GM10248 (cell line): ENCODE measurements at regions of chr9 and their contacts with region 1.

Region 1: DNA sequence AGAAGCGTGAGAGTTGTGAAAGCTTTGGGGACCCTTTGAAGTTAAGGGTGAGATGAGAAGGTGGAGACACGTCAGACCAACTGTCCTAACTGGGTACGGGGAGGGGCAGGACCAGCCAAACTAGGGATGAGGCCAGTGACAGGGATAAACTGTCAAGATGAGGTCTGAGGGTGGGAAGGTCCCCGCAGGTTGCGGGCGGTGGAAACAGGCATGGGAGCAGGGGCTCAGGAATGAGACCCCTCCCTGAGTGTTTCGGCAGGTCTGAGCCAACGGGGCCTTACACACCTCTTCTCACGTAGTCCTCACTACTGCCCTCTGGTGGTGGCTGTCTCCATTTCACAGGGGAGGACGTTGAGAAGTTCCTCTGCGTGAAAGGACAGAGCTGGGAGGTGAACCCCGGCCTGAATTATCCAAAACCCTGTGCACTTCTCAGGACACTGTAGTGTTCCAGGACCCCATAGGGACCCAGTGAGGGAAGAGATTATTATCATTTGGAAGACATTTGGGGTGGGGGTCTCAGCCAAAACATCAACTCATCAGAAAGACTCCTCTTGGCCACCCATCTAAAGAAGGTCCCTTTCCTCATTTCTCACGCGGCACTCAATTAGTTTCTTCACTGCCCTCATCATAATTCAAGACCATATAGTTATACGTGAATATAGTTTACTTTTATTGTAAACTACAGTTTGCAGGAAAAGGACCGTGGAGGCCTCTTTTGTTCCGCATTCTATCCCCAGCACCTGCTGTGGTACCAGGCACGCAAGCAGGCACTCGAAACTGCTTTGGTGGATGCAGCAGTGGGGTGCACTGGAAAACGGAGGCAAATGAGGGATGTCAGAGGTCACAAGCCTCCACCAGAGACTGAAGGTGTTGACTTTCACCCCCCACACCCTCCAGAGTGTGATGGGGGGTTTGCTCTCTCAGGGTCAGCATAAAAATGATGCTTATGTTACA is 21.7 kb upstream of the NANS start:
- DNase-seq: peak; percentile 80
- CTCF ChIP-seq: peak; percentile 90

Region 2: DNA sequence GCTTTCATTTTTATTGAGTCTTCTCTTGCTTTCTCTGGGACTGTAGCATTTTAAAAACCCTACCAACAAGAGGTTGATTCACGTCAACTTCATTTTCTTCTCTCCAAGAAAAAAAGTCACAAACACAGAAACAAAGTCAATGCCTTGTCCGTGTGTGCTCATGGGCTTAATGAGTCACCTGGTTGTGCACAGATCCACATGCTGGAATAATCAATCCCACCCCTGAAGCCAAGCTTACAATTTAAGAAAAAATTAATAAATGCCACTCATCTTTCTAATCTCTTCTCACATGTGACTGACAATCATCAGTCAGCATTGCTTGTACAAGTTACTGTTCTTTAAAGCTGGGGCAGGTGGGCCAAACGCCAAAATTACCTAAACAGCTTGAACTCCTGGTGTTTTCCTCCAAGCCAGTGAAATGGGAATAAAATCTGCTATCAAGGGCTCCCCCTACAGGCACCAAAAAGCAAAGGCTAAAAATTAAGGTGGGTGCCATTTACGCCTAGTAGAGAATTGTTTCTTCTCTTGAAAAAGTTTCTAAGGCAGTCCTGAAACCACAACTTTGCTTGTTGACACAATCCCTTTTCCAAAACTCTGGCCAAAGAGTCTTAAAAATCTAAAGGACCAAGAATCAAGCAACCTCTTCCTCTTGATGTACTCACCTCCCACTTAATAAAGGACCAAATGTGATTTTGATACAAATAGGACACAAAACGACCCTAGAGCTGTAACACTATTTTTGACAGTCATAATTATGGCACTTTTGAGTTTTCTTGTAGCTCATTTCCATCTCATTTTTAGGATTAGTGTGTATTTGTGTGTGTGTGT is 133.9 kb before region 1 on chr9:
- CTCF ChIA-PET with region 1: no interaction called
- POLR2A ChIA-PET with region 1: no interaction called
- DNase-seq: peak; percentile 54
- CTCF ChIP-seq: peak; percentile 77

Region 3: DNA sequence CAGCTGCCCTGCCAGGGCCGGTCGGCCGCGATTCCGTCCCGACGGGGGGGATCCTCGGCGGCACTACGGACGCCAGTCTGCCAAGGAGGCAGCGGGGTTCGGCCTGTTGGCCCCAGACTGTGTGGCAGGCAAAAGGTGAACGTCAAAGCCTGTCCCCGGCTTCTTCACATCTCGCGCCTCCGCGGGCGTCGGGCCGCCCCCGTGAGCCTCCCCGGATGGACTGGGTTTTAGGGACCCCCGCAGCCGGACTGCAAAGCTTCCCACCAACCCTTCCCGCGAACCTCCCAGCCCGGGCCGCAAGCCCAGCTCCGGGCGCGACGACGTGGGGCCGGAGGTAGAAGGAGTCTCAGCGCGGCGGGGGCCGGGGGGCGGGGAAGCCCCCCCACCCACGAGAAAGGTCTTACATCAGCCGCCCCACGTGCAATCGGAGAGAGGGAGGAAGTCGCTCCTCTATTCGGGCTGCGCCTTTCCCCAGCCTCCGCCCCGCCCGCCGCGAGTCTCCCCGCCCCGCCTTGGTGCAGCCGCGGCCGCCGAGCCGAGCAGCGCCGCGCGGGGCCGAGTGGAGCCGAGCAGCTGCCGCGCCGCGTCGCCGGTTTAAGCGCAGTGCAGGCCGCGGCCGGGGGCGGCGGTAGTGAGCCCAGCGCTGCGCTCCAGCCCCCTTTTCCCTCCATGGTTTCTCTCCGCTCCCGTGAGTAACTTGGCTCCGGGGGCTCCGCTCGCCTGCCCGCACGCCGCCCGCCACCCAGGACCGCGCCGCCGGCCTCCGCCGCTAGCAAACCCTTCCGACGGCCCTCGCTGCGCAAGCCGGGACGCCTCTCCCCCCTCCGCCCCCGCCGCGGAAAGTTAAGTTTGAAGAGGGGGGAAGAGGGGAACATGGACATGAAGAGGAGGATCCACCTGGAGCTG is 51.9 kb before region 1 on chr9 and contains the start of gene ANP32B:
- CTCF ChIA-PET with region 1: interaction called, 17 read pairs
- POLR2A ChIA-PET with region 1: no interaction called
- DNase-seq: peak; percentile 94
- CTCF ChIP-seq: peak; percentile 92

Region 4: DNA sequence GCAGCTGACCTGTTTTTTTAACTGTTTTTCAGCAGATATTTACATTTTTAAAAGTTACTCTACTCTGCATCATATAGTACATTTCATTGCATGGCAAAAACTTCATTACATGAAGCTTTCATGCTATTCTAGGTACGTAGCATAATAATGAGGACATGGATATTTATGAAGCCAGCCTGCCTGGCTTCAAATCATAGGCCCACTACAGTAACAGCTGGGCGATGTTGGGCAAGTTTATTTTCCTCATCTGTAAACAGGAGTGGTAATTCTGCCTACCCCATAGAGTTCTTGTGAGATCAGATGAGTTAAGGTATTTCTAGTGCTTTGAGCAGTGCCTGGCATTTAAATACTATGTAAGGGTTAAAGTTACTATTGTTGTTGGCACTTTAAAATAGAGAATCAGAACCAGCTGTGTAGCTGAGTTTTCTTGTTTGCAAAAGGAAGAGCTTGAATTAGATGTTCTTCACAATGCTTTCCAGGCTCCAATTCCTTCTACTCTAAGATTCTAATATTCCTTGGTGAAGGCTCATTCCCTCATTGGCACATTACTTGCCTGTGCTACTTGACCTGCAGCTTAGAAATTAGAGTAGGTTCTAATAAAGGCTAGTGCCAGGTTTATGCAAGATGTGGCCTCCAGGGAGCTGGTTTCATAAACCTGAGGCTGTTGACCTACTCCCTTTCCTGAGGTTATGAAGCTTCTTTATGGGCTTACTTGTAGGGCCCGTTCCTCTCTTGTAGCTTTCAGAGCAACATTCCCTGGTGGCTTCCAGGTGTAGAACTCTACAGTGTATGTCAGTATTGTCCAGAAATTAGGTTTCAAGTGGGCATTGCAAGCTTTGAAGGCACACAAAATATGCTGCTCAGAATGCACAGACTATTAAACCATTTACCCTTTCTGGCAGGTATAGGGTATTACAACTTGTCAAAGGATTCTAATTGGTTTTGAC is 37.3 kb before region 1 on chr9:
- CTCF ChIA-PET with region 1: interaction called, 15 read pairs
- POLR2A ChIA-PET with region 1: no interaction called
- DNase-seq: no peak
- CTCF ChIP-seq: no peak

Region 5: DNA sequence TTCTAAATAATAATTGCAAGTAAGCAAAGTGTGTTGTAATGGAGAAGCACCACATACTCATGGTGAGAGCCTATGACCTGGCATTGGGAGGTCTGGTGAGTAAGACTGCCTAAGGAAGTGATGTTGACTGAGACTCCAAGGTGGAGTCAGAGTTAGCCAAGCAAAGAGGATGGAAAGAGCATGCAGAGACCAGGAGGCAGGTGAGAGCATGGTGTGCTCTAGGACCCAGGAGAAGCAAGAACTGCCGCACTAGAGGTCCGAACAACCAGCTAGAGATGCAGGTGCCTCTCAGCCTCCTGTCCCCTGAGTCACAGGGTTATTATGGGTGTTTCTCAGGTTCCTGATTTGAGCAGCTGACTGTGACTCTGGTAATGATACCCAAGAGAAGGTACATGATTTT is 24.4 kb before region 1 on chr9:
- CTCF ChIA-PET with region 1: interaction called, 17 read pairs
- POLR2A ChIA-PET with region 1: no interaction called
- DNase-seq: peak; percentile 48
- CTCF ChIP-seq: no peak

Region 6: GRCh38 chr9:98045234-98046179 is 10.6 kb after region 1 on chr9:
- CTCF ChIA-PET with region 1: interaction called, 74 read pairs
- POLR2A ChIA-PET with region 1: no interaction called
- DNase-seq: no peak
- CTCF ChIP-seq: peak; percentile 20